ENCODE measurements at regions of chr1 and their contacts with region 1.

Region 1: GRCh38 chr1:205977402-205978014 is 25.7 kb downstream of the RAB7B start:
- DNase-seq: peak; percentile 70 to 81
- ATAC-seq: peak; percentile 85 to 97
- H3K4me3 ChIP-seq: no peak overlapping the region
- H3K27ac ChIP-seq: peak overlapping the region; percentile 59 to 77; a peak in 4 of 6 replicates
- H3K4me1 ChIP-seq: peaks cover 16% of the 10 kb centered on the region
- CTCF ChIP-seq: peak; percentile 98
- EP300 ChIP-seq: no peak
- POLR2A ChIP-seq: no peak
- RAD21 ChIP-seq: peak; percentile 99

Region 2: GRCh38 chr1:205658943-205659581 is 318.4 kb before region 1 on chr1:
- CTCF ChIA-PET with region 1: interaction called, 38 read pairs
- POLR2A ChIA-PET with region 1: no interaction called
- DNase-seq: peak; percentile 56 to 87
- ATAC-seq: peak; percentile 85 to 94
- H3K4me3 ChIP-seq: no peak overlapping the region
- H3K27ac ChIP-seq: no peak overlapping the region
- H3K4me1 ChIP-seq: no peaks in the 10 kb centered on the region
- CTCF ChIP-seq: peak; percentile 79
- EP300 ChIP-seq: no peak
- POLR2A ChIP-seq: no peak
- RAD21 ChIP-seq: peak; percentile 83 to 88

Region 3: DNA sequence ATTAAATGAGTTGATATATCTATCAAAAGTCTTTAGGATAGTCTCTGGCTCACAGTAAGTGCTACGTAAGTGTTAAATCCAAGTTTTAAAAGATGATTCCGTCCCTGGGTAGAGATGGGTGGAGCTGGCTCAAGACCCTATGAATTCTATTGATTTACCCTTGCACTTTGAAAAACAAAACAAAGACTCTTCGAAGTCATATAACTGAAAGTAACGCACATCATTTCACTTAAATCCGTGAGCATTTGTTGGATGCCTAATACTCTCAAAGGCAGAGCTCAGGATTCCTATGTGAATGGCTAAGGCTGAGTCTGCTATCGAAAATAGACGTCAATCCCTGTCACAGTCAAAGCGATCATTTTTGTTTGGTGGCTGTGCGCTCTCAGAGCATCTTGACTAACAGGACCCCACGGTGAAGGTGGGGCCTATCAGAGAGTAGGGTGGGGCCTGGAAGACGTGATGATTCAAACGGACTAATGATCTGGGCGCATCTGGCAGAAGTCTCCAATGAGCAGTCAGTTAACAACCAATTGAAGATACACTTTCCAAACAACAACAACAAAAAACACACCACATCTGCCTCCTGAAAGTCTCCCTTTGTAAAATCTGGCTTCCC is 226.4 kb before region 1 on chr1:
- CTCF ChIA-PET with region 1: no interaction called
- POLR2A ChIA-PET with region 1: no interaction called
- DNase-seq: peak in 1 of 2 experiments; percentile 19
- ATAC-seq: no peak
- H3K4me3 ChIP-seq: peak overlapping the region; percentile 99; the same call in 2 of the 3 replicates
- H3K27ac ChIP-seq: peak overlapping the region; percentile 99 to 100; a peak in 5 of 6 replicates
- H3K4me1 ChIP-seq: peaks cover 20% of the 10 kb centered on the region
- CTCF ChIP-seq: no peak
- EP300 ChIP-seq: no peak
- POLR2A ChIP-seq: no peak
- RAD21 ChIP-seq: no peak

Region 4: DNA sequence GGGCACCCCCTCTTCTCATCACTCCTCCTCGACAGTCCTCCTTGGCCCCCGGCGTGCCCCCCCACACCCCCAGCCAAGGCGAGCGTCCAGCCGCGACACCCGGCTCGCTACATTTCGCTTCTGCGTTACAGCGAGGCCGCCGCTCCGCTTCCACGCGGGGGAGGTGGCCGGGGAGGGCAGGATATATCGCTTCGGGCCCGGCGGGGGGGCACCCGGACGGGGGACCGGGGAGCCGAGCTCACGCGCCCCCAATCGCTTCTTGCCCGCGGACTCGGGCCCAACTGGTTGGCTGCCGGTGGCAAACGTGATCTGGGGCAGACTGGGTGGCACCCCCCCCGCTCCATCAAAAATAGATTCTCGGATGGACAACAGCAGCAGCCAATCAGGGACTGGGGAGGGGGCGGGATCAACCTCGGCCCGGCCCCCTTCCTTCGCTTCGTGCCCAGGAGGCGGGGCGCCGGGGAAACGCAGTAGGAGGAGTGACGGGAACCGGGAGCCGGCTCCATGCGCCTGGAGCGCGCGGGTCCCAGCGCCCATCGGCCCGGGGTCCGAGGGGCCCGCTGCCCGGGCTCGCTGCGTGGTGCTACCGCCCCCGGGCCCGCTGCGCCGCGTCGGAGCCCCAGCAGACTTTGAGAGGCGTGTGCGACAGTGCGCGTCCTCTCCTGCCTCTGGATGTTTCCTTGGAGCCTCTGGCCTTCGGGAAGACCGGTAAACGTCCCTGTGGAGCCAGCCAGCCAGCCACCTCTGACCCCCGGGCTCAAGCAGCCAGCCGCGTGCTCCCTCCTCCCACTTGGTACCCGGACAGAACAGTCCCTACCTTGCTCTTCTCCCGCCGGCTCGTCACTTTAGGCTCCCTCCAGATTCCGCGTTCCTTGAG is 164.4 kb before region 1 on chr1 and contains the start of gene SLC41A1:
- CTCF ChIA-PET with region 1: interaction called, 22 read pairs
- POLR2A ChIA-PET with region 1: no interaction called
- DNase-seq: peak; percentile 90 to 95
- ATAC-seq: peak; percentile 94 to 95
- H3K4me3 ChIP-seq: peak within 1 kb of the TSS; percentile 76
- H3K27ac ChIP-seq: peak within 1 kb of the TSS; percentile 81 to 98
- H3K4me1 ChIP-seq: peaks cover 19% of the 10 kb centered on the region
- CTCF ChIP-seq: no peak
- EP300 ChIP-seq: no peak
- POLR2A ChIP-seq: peak; percentile 56
- RAD21 ChIP-seq: no peak
- polyA plus RNA-seq, gene SLC41A1: 23.5 and 26.0 TPM in 2 replicates

Region 5: GRCh38 chr1:205896320-205896719 is 81.2 kb before region 1 on chr1:
- CTCF ChIA-PET with region 1: interaction called, 18 read pairs
- POLR2A ChIA-PET with region 1: no interaction called
- DNase-seq: no peak
- ATAC-seq: no peak
- H3K4me3 ChIP-seq: no peak overlapping the region
- H3K27ac ChIP-seq: no peak overlapping the region
- H3K4me1 ChIP-seq: no peaks in the 10 kb centered on the region
- CTCF ChIP-seq: no peak
- EP300 ChIP-seq: no peak
- POLR2A ChIP-seq: no peak
- RAD21 ChIP-seq: no peak

Region 6: GRCh38 chr1:205939690-205940330 is 37.7 kb before region 1 on chr1:
- CTCF ChIA-PET with region 1: interaction called, 822 read pairs
- POLR2A ChIA-PET with region 1: no interaction called
- DNase-seq: peak; percentile 58 to 82
- ATAC-seq: peak; percentile 46 to 69; a peak in 5 of 6 replicates
- H3K4me3 ChIP-seq: no peak overlapping the region
- H3K27ac ChIP-seq: peak overlapping the region; percentile 68 to 93
- H3K4me1 ChIP-seq: peaks cover 59% of the 10 kb centered on the region
- CTCF ChIP-seq: no peak
- EP300 ChIP-seq: no peak
- POLR2A ChIP-seq: no peak
- RAD21 ChIP-seq: no peak

Region 7: DNA sequence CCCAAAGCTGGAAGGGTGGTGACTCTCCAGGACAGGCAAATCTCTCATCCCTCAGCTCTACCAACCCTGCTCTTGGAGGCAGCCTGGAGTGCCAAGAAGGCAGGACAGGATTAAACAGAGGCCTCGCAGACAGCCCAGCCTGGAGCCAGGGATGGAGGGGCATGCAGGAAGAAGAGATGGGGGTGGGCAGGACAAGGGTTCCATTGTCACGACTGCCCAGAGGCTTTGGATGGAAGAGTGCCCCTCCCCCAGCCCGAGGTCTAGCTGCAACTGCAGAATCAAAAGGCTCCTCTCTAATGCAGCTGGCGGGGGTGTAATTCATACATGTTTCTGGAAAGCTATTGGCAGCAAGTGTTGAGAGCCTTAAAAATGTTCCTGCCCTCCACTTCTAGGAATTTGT is 16.8 kb after region 1 on chr1:
- CTCF ChIA-PET with region 1: interaction called, 60 read pairs
- POLR2A ChIA-PET with region 1: no interaction called
- DNase-seq: no peak
- ATAC-seq: no peak
- H3K4me3 ChIP-seq: no peak overlapping the region
- H3K27ac ChIP-seq: no peak overlapping the region
- H3K4me1 ChIP-seq: no peaks in the 10 kb centered on the region
- CTCF ChIP-seq: no peak
- EP300 ChIP-seq: no peak
- POLR2A ChIP-seq: no peak
- RAD21 ChIP-seq: no peak

Region 8: GRCh38 chr1:206106328-206107167 is 129.0 kb after region 1 on chr1:
- CTCF ChIA-PET with region 1: interaction called, 325 read pairs
- POLR2A ChIA-PET with region 1: no interaction called
- DNase-seq: peak; percentile 71 to 81
- ATAC-seq: peak; percentile 87 to 98
- H3K4me3 ChIP-seq: no peak overlapping the region
- H3K27ac ChIP-seq: no peak overlapping the region
- H3K4me1 ChIP-seq: no peaks in the 10 kb centered on the region
- CTCF ChIP-seq: peak; percentile 92
- EP300 ChIP-seq: no peak
- POLR2A ChIP-seq: no peak
- RAD21 ChIP-seq: peak; percentile 90 to 94

Measured in A549 (cell line).